IMR-90 (cell line): ENCODE measurements at regions of chr10 and their contacts with region 1.

Region 1: DNA sequence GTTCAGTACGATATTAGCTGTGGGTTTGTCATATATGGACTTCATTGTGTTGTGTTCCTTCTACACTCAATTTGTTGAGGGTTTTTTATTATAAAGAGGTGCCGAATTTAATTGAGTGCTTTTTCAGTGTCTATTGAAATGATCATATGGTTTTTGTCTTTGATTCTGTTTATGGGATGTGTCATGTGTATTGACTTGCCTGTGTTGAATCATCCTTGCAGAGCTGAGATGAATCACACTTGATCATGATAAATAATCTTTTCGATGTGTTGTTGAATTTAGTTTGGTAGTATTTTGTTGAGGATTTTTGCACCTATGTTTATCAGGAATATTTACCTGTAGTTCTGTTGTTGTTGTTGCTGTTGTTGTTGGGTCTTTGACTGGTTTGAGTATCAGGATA is 39.8 kb downstream of the ATOH7 start:
- DNase-seq: peak; percentile 56
- ATAC-seq: peak; percentile 48; the same call in 1 of the 2 replicates
- H3K4me3 ChIP-seq: no peak overlapping the region
- H3K27ac ChIP-seq: no peak overlapping the region
- H3K4me1 ChIP-seq: no peaks in the 10 kb centered on the region
- H3K27me3 ChIP-seq: no peaks in the 10 kb centered on the region
- CTCF ChIP-seq: no peak
- POLR2A ChIP-seq: no peak
- RAD21 ChIP-seq: no peak

Region 2: DNA sequence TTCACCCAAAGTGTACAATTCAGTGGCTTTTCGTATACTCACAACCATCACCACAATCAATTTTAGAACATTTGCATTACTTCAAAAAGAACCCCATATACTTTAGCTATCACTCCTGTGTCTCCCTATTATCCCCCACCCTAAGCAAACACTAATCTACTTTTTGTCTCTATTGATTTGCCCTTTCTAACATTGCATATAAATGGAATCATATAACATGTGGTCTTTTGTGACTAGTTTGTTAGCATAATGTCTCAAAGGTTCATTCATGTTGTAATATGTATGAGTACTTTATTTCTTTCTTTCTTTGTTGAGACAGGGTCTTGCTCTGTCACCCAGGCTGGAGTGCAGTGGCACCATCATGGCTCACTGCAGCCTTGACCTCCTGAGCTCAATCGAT is 333.1 kb before region 1 on chr10:
- CTCF ChIA-PET with region 1: no interaction called
- POLR2A ChIA-PET with region 1: interaction called, 3 read pairs
- dilution Hi-C with region 1: no loop called
- in situ Hi-C with region 1: loop called (anchors 25 kb)
- intact Hi-C with region 1: loop called (anchors 5 kb)
- DNase-seq: no peak
- ATAC-seq: no peak
- H3K4me3 ChIP-seq: no peak overlapping the region
- H3K27ac ChIP-seq: no peak overlapping the region
- H3K4me1 ChIP-seq: no peaks in the 10 kb centered on the region
- H3K27me3 ChIP-seq: no peaks in the 10 kb centered on the region
- CTCF ChIP-seq: no peak
- POLR2A ChIP-seq: no peak
- RAD21 ChIP-seq: no peak

Region 3: DNA sequence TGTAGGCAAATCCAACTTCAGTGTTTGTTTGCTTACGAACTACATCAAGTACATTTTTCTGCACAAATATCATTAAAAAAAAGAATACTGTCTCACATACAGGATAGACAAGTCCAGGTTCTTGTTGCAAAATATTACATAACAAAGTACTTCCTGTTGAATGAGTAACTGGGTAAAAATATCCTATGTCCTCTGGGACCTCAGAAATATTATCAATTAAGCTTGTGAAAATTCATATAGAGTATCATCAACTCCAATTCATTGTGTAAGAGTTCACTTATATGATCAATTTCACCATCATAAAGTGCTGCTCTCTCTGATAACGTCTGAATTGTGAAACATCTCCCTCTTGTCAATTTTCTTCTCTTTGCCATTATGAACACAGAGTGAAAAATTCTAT is 139.7 kb before region 1 on chr10:
- CTCF ChIA-PET with region 1: no interaction called
- POLR2A ChIA-PET with region 1: no interaction called
- dilution Hi-C with region 1: no loop called
- in situ Hi-C with region 1: no loop called
- intact Hi-C with region 1: no loop called
- DNase-seq: peak; percentile 29
- ATAC-seq: no peak
- H3K4me3 ChIP-seq: no peak overlapping the region
- H3K27ac ChIP-seq: no peak overlapping the region
- H3K4me1 ChIP-seq: peaks cover 5% of the 10 kb centered on the region; the same call in 1 of the 2 replicates
- H3K27me3 ChIP-seq: no peaks in the 10 kb centered on the region
- CTCF ChIP-seq: no peak
- POLR2A ChIP-seq: no peak
- RAD21 ChIP-seq: no peak

Region 4: GRCh38 chr10:68367121-68367520 is 175.0 kb after region 1 on chr10:
- CTCF ChIA-PET with region 1: no interaction called
- POLR2A ChIA-PET with region 1: no interaction called
- dilution Hi-C with region 1: no loop called
- in situ Hi-C with region 1: no loop called
- intact Hi-C with region 1: no loop called
- DNase-seq: no peak
- ATAC-seq: no peak
- H3K4me3 ChIP-seq: no peak overlapping the region
- H3K27ac ChIP-seq: no peak overlapping the region
- H3K4me1 ChIP-seq: no peaks in the 10 kb centered on the region
- H3K27me3 ChIP-seq: no peaks in the 10 kb centered on the region
- CTCF ChIP-seq: no peak
- POLR2A ChIP-seq: no peak
- RAD21 ChIP-seq: no peak